ENCODE measurements at regions of chr20 and their contacts with region 1.

Region 1: DNA sequence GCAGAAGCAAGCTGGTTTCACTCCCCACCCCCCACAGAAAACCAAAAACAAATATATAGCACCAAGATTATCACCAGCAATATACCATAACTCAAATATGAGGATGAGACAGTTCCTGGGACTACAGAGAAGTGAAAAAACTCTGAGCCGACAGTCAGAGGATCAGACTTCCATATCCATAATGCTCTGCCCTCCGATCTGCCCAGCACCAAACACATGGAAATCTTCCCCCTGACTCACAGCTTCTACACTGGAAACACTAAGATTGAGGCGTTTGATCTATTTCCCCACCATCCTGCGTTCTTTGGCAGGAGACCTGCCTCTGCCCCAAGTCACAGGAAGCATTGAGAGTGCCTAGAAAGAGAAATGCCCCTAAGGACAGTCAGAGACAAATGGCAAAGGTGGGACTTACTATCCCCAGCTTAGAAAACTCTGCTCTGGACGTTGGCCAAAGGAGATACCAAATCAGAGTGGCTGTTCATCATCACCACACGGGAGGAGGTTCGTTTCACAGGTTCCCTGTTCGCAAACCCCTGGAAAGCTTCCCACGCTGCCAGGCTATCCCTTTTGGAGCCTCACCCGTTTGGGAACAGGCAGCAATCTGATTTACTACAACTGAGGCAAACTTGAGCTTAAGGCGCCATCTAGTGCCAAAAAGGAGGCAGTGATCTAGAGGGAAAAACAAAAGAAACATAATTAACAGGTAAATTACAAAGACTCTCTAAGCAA is 48.7 kb upstream of the SRSF6 start:
- ATAC-seq: peak in 4 of 8 experiments; percentile 57 to 92 (median 80)
- H3K4me3 ChIP-seq: no peak overlapping the region
- H3K27ac ChIP-seq: no peak overlapping the region
- H3K4me1 ChIP-seq: no peaks in the 10 kb centered on the region

Region 2: GRCh38 chr20:41738604-41739206 is 1670.3 kb before region 1 on chr20:
- in situ Hi-C with region 1: loop called in 2 of 9 experiments (anchors 25 kb)
- ATAC-seq: peak; percentile 65 to 91 (median 80)
- H3K4me3 ChIP-seq: no peak overlapping the region
- H3K27ac ChIP-seq: no peak overlapping the region
- H3K4me1 ChIP-seq: no peaks in the 10 kb centered on the region